Activated CD4-positive, alpha-beta memory T cell treated with anti-CD3 and anti-CD28 coated beads for 36 hours (primary cell): ENCODE measurements at regions of chr10 and their contacts with region 1.

Region 1: DNA sequence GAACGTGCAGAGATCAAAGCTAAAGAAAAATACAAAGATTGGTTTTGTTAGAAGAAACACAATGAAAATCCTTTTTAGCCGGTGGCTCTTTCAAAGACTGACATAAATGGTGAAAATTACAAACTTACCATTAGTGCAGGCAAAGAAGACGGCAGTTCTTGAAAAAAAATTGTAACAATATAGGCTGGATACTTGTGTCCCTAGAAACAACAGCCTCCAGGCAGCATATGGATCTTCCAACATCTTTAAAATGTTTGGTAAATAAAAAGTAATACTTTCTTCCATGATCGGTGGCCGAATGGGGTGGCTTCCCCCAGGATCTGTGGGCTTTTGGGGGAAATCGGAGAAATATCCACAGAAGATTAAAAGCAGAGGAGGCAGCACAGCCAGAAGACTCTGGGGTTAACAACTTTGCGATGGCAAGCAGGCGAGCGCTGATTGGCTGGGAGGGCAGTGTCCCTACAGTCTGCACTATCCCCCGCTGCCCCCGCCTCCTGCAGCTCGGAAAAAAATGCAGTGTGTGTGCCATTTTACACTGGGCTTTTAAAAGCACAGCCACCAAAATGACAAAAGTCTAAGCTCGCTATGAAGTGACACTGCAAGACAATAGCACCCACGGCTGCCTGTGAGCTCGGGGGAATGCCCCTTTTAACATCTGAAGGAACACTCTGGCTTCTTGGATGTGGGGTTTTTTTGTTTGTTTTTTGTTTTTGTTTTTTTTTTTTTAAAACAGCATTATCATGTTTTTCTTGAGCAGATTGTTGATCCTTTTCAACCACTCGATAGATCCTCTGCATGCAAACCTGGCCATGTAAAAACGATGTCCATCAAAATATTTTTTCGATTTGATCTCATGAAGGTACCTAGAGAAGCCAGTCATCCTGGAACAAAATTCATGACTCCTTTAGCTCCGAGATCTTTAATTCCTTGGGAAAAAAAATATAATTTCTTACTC is 31.7 kb upstream of the EPC1 start:
- DNase-seq: peak; percentile 96
- H3K4me3 Mint-ChIP-seq: no peak overlapping the region
- H3K27ac Mint-ChIP-seq: no peak overlapping the region
- H3K4me1 Mint-ChIP-seq: peaks cover 22% of the 10 kb centered on the region
- H3K27me3 Mint-ChIP-seq: no peaks in the 10 kb centered on the region

Region 2: GRCh38 chr10:32318476-32318896 is 60.2 kb before region 1 on chr10:
- CTCF ChIA-PET with region 1: no interaction called
- POLR2A ChIA-PET with region 1: no interaction called
- intact Hi-C with region 1: loop called (anchors 2 kb)
- DNase-seq: peak; percentile 55
- H3K4me3 Mint-ChIP-seq: peak overlapping the region; percentile 48
- H3K27ac Mint-ChIP-seq: peak overlapping the region; percentile 88
- H3K4me1 Mint-ChIP-seq: peaks cover 77% of the 10 kb centered on the region
- H3K27me3 Mint-ChIP-seq: no peaks in the 10 kb centered on the region

Region 3: DNA sequence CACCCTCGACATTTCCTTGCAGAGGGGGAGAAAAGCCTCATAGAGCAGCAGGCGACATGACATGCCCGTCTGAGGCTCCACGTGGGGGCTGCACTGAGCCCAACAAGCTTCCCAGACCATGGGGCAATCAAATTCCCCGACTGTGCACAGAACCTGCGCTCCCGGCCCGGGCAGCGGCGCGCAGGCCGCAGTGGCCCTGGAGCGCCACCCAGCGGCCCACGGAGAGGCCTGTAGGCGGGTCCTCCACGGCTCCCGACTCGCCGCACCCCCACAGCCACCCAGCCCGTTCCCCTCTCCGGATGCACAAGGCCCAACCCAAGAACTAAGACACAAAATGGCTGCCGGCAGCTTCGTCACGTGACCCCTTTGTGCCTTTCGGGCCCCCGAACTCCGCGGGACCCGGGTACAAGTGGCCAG is 32.5 kb before region 1 on chr10:
- CTCF ChIA-PET with region 1: interaction called, 11 read pairs
- POLR2A ChIA-PET with region 1: interaction called, 13 read pairs
- intact Hi-C with region 1: loop called (anchors 1 kb)
- DNase-seq: peak; percentile 97
- H3K4me3 Mint-ChIP-seq: peak overlapping the region; percentile 94
- H3K27ac Mint-ChIP-seq: peak overlapping the region; percentile 99
- H3K4me1 Mint-ChIP-seq: peaks cover 63% of the 10 kb centered on the region
- H3K27me3 Mint-ChIP-seq: no peaks in the 10 kb centered on the region

Region 4: DNA sequence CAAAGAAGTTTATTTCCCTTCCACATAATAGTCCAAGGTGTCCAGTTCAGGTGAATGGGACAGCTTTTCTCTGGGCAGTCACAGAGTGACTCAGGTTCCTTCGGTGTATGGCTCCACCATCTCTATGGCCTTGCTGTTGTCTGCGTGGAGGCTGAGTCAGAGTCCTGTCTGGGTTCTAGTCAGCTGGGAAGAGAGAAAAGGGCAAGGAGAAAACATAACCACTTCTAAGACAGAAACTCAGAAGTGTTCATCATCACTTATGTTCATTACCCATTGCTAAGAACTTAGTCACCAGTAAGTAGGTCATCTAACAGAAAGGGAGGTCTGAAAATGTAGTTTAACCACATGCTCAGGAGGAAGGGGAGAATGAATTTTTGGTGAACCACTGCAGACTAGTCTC is 34.9 kb after region 1 on chr10:
- CTCF ChIA-PET with region 1: no interaction called
- POLR2A ChIA-PET with region 1: interaction called, 6 read pairs
- intact Hi-C with region 1: loop called (anchors 1 kb)
- DNase-seq: peak; percentile 79
- H3K4me3 Mint-ChIP-seq: no peak overlapping the region
- H3K27ac Mint-ChIP-seq: peak overlapping the region; percentile 26
- H3K4me1 Mint-ChIP-seq: peaks cover 17% of the 10 kb centered on the region
- H3K27me3 Mint-ChIP-seq: no peaks in the 10 kb centered on the region

Region 5: GRCh38 chr10:32693441-32693979 is 314.9 kb after region 1 on chr10:
- CTCF ChIA-PET with region 1: no interaction called
- POLR2A ChIA-PET with region 1: no interaction called
- intact Hi-C with region 1: no loop called
- DNase-seq: no peak
- H3K4me3 Mint-ChIP-seq: no peak overlapping the region
- H3K27ac Mint-ChIP-seq: no peak overlapping the region
- H3K4me1 Mint-ChIP-seq: no peaks in the 10 kb centered on the region
- H3K27me3 Mint-ChIP-seq: no peaks in the 10 kb centered on the region

Region 6: DNA sequence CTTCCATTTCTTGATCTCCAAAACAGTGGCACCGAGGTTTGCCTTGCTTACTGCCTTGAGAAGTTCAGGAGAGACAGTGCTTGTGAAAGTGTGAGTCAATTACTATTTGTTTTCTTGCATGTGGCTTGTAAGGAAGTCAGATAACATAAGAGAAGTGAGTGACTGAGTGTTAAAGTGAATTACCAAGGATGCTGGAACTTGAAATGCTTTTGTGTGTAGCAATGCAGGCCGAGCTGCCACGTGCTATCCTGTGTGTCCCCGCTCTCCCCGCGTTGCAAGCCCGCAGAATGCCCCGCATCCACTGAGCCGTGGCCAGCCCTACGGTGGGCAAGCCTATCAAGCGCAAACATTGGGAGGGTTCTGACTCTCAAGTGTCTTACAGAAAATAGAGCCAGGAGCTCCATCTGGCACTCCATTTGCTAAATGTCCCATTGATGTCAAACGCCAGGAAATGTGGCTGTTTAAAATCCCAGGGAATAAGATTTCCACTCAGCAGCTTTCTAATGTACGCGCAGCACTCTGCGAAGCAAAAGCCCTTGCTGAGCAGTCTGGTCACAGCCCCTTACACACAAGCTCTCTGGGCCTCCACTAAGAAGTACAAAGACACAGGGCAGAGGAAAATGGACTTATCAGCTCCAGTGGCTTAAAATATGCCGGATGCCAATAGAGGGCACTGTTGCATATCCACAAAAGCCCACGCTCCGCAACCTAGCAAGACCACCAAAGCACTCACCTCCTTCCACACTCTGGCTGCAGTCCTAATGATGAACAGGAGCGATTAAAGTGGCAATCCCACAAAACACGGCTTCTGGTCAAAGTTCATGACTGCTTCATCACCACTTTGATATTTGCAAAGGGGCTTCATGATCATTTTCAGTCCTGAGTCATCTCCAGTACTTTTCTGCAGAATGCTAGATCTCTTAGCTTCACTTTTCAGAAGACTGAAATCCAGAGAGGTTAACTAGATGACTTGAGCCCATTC is 737.4 kb after region 1 on chr10:
- CTCF ChIA-PET with region 1: no interaction called
- POLR2A ChIA-PET with region 1: no interaction called
- intact Hi-C with region 1: loop called (anchors 5 kb)
- DNase-seq: peak; percentile 53
- H3K4me3 Mint-ChIP-seq: peak overlapping the region; percentile 47
- H3K27ac Mint-ChIP-seq: peak overlapping the region; percentile 81
- H3K4me1 Mint-ChIP-seq: peaks cover 92% of the 10 kb centered on the region
- H3K27me3 Mint-ChIP-seq: peaks cover 4% of the 10 kb centered on the region